Aorta (tissue), 5 donors: ENCODE measurements at regions of chr14 and their contacts with region 1.

Region 1: DNA sequence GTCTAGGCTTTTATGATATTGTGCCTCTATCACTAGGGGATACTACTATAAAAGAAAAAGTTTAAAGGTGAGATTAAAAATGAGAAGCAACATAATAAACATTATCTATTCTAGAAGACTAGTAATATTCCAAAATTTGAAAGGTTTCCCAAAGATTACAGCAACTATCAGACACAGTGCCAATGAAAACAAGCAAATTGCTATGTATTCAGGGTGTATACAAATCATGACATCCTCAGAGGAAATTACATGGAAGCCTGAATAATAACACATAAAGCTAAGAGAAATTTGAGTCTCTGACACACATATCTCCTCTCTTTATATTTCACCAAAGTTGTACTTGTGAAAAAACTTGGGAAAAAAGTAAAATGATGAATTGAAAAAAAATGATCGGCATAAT is 327.0 kb downstream of the SEC23A start:
- DNase-seq: no peak
- ATAC-seq: no peak
- H3K4me3 ChIP-seq: no peak overlapping the region
- H3K27ac ChIP-seq: no peak overlapping the region
- H3K4me1 ChIP-seq: no peaks in the 10 kb centered on the region
- H3K27me3 ChIP-seq: peaks cover 0 to 2% of the 10 kb centered on the region in 2 donors

Region 2: GRCh38 chr14:38752750-38753149 is 23.2 kb before region 1 on chr14:
- intact Hi-C with region 1: loop called in 1 of 2 experiments (anchors 2 kb)
- DNase-seq: no peak
- ATAC-seq: no peak
- H3K4me3 ChIP-seq: no peak overlapping the region
- H3K27ac ChIP-seq: no peak overlapping the region
- H3K4me1 ChIP-seq: no peaks in the 10 kb centered on the region
- H3K27me3 ChIP-seq: no peaks in the 10 kb centered on the region

Region 3: GRCh38 chr14:39568809-39569538 is 793.0 kb after region 1 on chr14:
- intact Hi-C with region 1: no loop called
- DNase-seq: no peak
- ATAC-seq: no peak
- H3K4me3 ChIP-seq: no peak overlapping the region
- H3K27ac ChIP-seq: no peak overlapping the region
- H3K4me1 ChIP-seq: peaks cover 0 to 1% of the 10 kb centered on the region in 2 donors
- H3K27me3 ChIP-seq: no peaks in the 10 kb centered on the region